ENCODE measurements at regions of chr12 and their contacts with region 1.

Region 1: GRCh38 chr12:27305673-27306456 is 26.8 kb upstream of the BMAL2 start:
- DNase-seq: peak in 4 of 5 donors; percentile 28 to 42 (median 36)
- H3K4me3 ChIP-seq: no peak overlapping the region
- H3K4me3 Mint-ChIP-seq: no peak overlapping the region
- H3K27ac ChIP-seq: no peak overlapping the region
- H3K27ac Mint-ChIP-seq: peak overlapping the region in 4 of 7 donors; percentile 29 to 35 (median 32)
- H3K4me1 ChIP-seq: no peaks in the 10 kb centered on the region
- H3K4me1 Mint-ChIP-seq: no peaks in the 10 kb centered on the region
- H3K27me3 ChIP-seq: no peaks in the 10 kb centered on the region
- H3K27me3 Mint-ChIP-seq: no peaks in the 10 kb centered on the region

Region 2: DNA sequence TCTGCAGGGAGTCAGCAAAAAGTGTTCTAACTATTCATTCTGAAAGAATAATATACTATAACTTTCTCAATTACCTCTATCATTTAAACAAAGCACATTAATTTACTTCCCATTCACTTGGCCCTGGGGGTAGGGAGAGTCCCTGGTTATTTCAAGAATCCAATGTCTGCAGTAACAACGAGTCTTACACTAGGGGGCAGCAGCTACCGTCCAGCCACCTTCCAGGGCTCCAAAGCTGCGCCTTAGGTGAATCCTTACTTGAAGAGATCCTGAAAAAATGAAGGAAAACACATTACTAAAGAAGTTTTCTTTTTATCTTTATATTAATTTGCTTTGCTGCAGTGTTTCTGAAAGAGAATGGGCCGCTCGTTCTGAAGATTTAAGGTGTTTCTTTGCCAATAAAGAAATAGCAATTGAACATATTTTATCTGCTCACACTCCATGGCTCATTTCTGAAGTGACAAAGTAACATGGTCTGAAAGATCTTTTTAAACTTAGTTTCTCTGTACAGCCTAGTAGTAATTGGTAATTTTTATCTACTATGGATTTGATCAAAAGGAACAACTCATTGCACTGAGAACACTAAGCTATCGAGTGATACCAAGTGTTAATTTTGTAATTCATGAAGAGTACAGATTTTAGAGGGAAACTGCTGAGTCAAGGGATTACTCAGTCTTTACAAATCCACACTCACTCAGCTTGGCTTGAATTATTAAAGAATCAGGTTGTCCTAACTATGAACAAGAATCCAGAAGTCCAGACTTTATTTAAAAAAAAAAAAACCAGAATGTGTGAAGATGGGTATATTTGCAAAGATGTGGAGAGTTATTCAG is 1208.6 kb before region 1 on chr12:
- CTCF ChIA-PET with region 1: no interaction called
- POLR2A ChIA-PET with region 1: no interaction called
- intact Hi-C with region 1: loop called (anchors 1 kb)
- DNase-seq: peak; percentile 48 to 54 (median 49)
- H3K4me3 ChIP-seq: no peak overlapping the region
- H3K4me3 Mint-ChIP-seq: no peak overlapping the region
- H3K27ac ChIP-seq: no peak overlapping the region
- H3K27ac Mint-ChIP-seq: no peak overlapping the region
- H3K4me1 ChIP-seq: no peaks in the 10 kb centered on the region
- H3K4me1 Mint-ChIP-seq: peaks cover 0 to 1% (median 0%) of the 10 kb centered on the region in 4 donors
- H3K27me3 ChIP-seq: no peaks in the 10 kb centered on the region
- H3K27me3 Mint-ChIP-seq: peaks cover 7 to 9% of the 10 kb centered on the region in 2 donors

Region 3: GRCh38 chr12:26853303-26854030 is 452.4 kb before region 1 on chr12:
- CTCF ChIA-PET with region 1: interaction called, 9 read pairs
- POLR2A ChIA-PET with region 1: interaction called, 3 read pairs
- intact Hi-C with region 1: loop called (anchors 1 kb)
- DNase-seq: peak; percentile 59 to 69 (median 67)
- H3K4me3 ChIP-seq: no peak overlapping the region
- H3K4me3 Mint-ChIP-seq: no peak overlapping the region
- H3K27ac ChIP-seq: no peak overlapping the region
- H3K27ac Mint-ChIP-seq: peak overlapping the region in 2 of 7 donors; percentile 10 to 14
- H3K4me1 ChIP-seq: peaks cover 4% of the 10 kb centered on the region
- H3K4me1 Mint-ChIP-seq: no peaks in the 10 kb centered on the region
- H3K27me3 ChIP-seq: no peaks in the 10 kb centered on the region
- H3K27me3 Mint-ChIP-seq: peaks cover 3 to 6% of the 10 kb centered on the region in 2 donors

Region 4: GRCh38 chr12:26884765-26885576 is 420.9 kb before region 1 on chr12:
- CTCF ChIA-PET with region 1: interaction called, 15 read pairs
- POLR2A ChIA-PET with region 1: no interaction called
- intact Hi-C with region 1: no loop called
- DNase-seq: peak; percentile 77 to 82 (median 82)
- H3K4me3 ChIP-seq: no peak overlapping the region
- H3K4me3 Mint-ChIP-seq: peak overlapping the region; percentile 40 to 80 (median 67)
- H3K27ac ChIP-seq: no peak overlapping the region
- H3K27ac Mint-ChIP-seq: peak overlapping the region in 3 of 7 donors; percentile 42 to 60 (median 53)
- H3K4me1 ChIP-seq: peaks cover 4% of the 10 kb centered on the region
- H3K4me1 Mint-ChIP-seq: peaks cover 5 to 8% (median 7%) of the 10 kb centered on the region in 4 donors
- H3K27me3 ChIP-seq: no peaks in the 10 kb centered on the region
- H3K27me3 Mint-ChIP-seq: peaks cover 2 to 3% of the 10 kb centered on the region in 2 donors

Region 5: DNA sequence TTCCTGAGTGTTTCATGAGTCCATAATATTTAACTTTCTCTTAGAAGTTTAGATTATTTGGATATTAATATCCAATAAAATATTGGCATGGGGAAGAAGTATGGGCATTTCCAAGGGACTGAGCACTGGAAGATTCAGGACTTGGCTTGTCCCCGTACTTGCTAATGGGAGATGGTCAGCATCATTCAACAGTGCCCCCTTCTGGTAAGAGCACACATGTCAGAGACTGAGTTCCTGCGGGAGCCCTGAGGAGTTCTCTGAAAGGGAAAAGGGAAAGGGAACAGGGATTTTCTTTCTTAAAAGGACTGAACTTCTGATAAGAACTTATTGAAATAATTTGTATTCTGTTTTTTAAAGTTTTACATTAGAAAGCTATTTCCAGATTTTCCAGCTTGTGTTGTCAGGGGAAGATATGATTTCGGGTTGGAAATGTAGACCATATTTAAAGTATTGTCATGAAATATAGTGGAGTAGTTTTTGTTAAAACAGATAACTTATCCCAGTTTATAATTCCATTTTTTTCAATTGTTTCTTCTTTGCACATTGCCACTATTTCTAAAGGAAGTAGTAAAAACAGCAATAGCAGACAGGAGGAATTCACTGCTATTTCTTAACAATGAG is 163.7 kb before region 1 on chr12:
- CTCF ChIA-PET with region 1: interaction called, 7 read pairs
- POLR2A ChIA-PET with region 1: no interaction called
- intact Hi-C with region 1: loop called (anchors 5 kb)
- DNase-seq: peak in 4 of 5 donors; percentile 31 to 46 (median 36)
- H3K4me3 ChIP-seq: no peak overlapping the region
- H3K4me3 Mint-ChIP-seq: peak overlapping the region in 3 of 8 donors; percentile 33 to 46 (median 35)
- H3K27ac ChIP-seq: no peak overlapping the region
- H3K27ac Mint-ChIP-seq: no peak overlapping the region
- H3K4me1 ChIP-seq: peaks cover 9% of the 10 kb centered on the region
- H3K4me1 Mint-ChIP-seq: peaks cover 4 to 14% (median 9%) of the 10 kb centered on the region in 4 donors
- H3K27me3 ChIP-seq: no peaks in the 10 kb centered on the region
- H3K27me3 Mint-ChIP-seq: no peaks in the 10 kb centered on the region

Region 6: GRCh38 chr12:27243804-27244683 is 61.8 kb before region 1 on chr12 and contains the start of gene STK38L:
- CTCF ChIA-PET with region 1: interaction called, 3 read pairs
- POLR2A ChIA-PET with region 1: no interaction called
- intact Hi-C with region 1: loop called (anchors 10 kb)
- DNase-seq: peak; percentile 95 to 97 (median 97)
- H3K4me3 ChIP-seq: peak within 1 kb of the TSS; percentile 85 to 87
- H3K4me3 Mint-ChIP-seq: peak within 1 kb of the TSS; percentile 97 to 99 (median 98)
- H3K27ac ChIP-seq: peak within 1 kb of the TSS; percentile 77
- H3K27ac Mint-ChIP-seq: peak within 1 kb of the TSS; percentile 93 to 99 (median 99)
- H3K4me1 ChIP-seq: peaks cover 27% of the 10 kb centered on the region
- H3K4me1 Mint-ChIP-seq: peaks cover 32 to 58% (median 47%) of the 10 kb centered on the region in 4 donors
- H3K27me3 ChIP-seq: no peaks in the 10 kb centered on the region
- H3K27me3 Mint-ChIP-seq: no peaks in the 10 kb centered on the region
- total RNA-seq, gene STK38L: 17.2 to 21.8 TPM

Region 7: GRCh38 chr12:27319409-27319808 is 13.5 kb after region 1 on chr12:
- CTCF ChIA-PET with region 1: interaction called, 14 read pairs
- POLR2A ChIA-PET with region 1: no interaction called
- intact Hi-C with region 1: no loop called
- DNase-seq: no peak
- H3K4me3 ChIP-seq: no peak overlapping the region
- H3K4me3 Mint-ChIP-seq: no peak overlapping the region
- H3K27ac ChIP-seq: no peak overlapping the region
- H3K27ac Mint-ChIP-seq: no peak overlapping the region
- H3K4me1 ChIP-seq: no peaks in the 10 kb centered on the region
- H3K4me1 Mint-ChIP-seq: no peaks in the 10 kb centered on the region
- H3K27me3 ChIP-seq: no peaks in the 10 kb centered on the region
- H3K27me3 Mint-ChIP-seq: no peaks in the 10 kb centered on the region